Natural killer cell (primary cell): ENCODE measurements at regions of chr3 and their contacts with region 1.

Region 1: GRCh38 chr3:42635111-42635510 is 18.4 kb upstream of the ZBTB47 start:
- DNase-seq: peak in 1 of 2 donors; percentile 45
- ATAC-seq: peak in 1 of 3 donors; percentile 25
- H3K4me3 ChIP-seq: no peak overlapping the region
- H3K4me3 Mint-ChIP-seq: no peak overlapping the region
- H3K27ac ChIP-seq: no peak overlapping the region
- H3K27ac Mint-ChIP-seq: peak overlapping the region in 1 of 2 donors; percentile 15
- H3K4me1 ChIP-seq: peaks cover 7% of the 10 kb centered on the region
- H3K4me1 Mint-ChIP-seq: peaks cover 0 to 5% of the 10 kb centered on the region in 2 donors
- H3K27me3 ChIP-seq: no peaks in the 10 kb centered on the region
- H3K27me3 Mint-ChIP-seq: no peaks in the 10 kb centered on the region
- CTCF ChIP-seq: no peak

Region 2: GRCh38 chr3:42572278-42572677 is 62.8 kb before region 1 on chr3:
- intact Hi-C with region 1: no loop called
- DNase-seq: peak in 1 of 2 donors; percentile 58
- ATAC-seq: peak in 2 of 3 donors; percentile 46 to 76
- H3K4me3 ChIP-seq: no peak overlapping the region
- H3K4me3 Mint-ChIP-seq: no peak overlapping the region
- H3K27ac ChIP-seq: no peak overlapping the region
- H3K27ac Mint-ChIP-seq: no peak overlapping the region
- H3K4me1 ChIP-seq: no peaks in the 10 kb centered on the region
- H3K4me1 Mint-ChIP-seq: peaks cover 12 to 22% of the 10 kb centered on the region in 2 donors
- H3K27me3 ChIP-seq: no peaks in the 10 kb centered on the region
- H3K27me3 Mint-ChIP-seq: no peaks in the 10 kb centered on the region
- CTCF ChIP-seq: no peak

Region 3: GRCh38 chr3:42600111-42600988 is 34.8 kb before region 1 on chr3 and contains the start of gene NKTR:
- intact Hi-C with region 1: loop called (anchors 5 kb)
- DNase-seq: peak; percentile 99
- ATAC-seq: peak; percentile 89 to 95 (median 90)
- H3K4me3 ChIP-seq: peak within 1 kb of the TSS; percentile 81
- H3K4me3 Mint-ChIP-seq: peak within 1 kb of the TSS; percentile 94
- H3K27ac ChIP-seq: peak within 1 kb of the TSS; percentile 92
- H3K27ac Mint-ChIP-seq: peak within 1 kb of the TSS; percentile 98
- H3K4me1 ChIP-seq: peaks cover 12% of the 10 kb centered on the region
- H3K4me1 Mint-ChIP-seq: peaks cover 31 to 35% of the 10 kb centered on the region in 2 donors
- H3K27me3 ChIP-seq: no peaks in the 10 kb centered on the region
- H3K27me3 Mint-ChIP-seq: no peaks in the 10 kb centered on the region
- CTCF ChIP-seq: no peak
- total RNA-seq, gene NKTR: 212 to 252 (median 217) TPM

Region 4: DNA sequence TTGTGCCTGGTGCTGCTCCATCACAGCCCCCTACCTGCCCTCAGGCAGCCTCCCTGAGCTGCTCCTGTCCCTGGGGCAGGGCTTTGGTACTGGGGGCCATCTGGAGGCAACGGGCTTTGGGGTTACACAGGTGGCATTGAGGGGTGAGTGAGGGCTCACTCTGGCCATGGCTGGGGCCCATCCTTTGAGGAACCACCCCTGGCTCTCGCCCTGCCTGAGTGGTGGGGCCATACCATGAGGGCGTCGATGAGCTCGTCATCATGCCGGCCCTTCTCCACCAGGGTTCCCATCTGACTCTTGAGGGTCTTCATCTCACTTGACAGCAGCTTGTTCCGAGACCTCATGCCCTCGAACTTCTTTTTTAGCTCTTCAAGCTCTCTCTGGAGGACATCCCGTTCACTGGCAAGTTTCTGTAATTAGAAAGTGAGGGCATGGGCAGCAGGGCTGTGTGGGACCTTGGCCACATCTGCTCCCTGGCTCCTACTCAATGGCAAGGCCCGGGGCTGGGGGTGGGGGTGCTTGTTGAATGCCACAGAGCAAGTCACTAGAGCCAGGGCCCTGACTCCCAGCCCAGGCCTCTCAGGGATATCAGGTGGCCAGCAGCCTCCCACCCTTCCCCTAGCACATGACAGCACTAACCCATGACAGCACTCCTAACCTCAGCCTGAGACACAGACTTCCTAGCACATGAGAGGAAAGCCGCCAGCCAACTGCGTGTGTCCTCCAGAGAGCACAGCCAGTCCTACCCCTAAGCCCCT is 104.5 kb after region 1 on chr3:
- intact Hi-C with region 1: no loop called
- DNase-seq: no peak
- ATAC-seq: no peak
- H3K4me3 ChIP-seq: no peak overlapping the region
- H3K4me3 Mint-ChIP-seq: no peak overlapping the region
- H3K27ac ChIP-seq: no peak overlapping the region
- H3K27ac Mint-ChIP-seq: no peak overlapping the region
- H3K4me1 ChIP-seq: no peaks in the 10 kb centered on the region
- H3K4me1 Mint-ChIP-seq: no peaks in the 10 kb centered on the region
- H3K27me3 ChIP-seq: no peaks in the 10 kb centered on the region
- H3K27me3 Mint-ChIP-seq: peaks cover 3 to 7% of the 10 kb centered on the region in 2 donors
- CTCF ChIP-seq: no peak